ENCODE measurements at regions of chr1 and their contacts with region 1.

Region 1: GRCh38 chr1:111334169-111334568 is 43.5 kb downstream of the CHIA start:
- DNase-seq: peak in 23 of 42 donors; percentile 3 to 61 (median 34)

Region 2: GRCh38 chr1:111227851-111228747 is 106.1 kb before region 1 on chr1:
- intact Hi-C with region 1: loop called (anchors 5 kb)
- DNase-seq: peak in 20 of 42 donors; percentile 18 to 70 (median 46)

Region 3: GRCh38 chr1:111256988-111257658 is 77.0 kb before region 1 on chr1:
- intact Hi-C with region 1: no loop called
- DNase-seq: no peak

Region 4: GRCh38 chr1:111856411-111857185 is 522.4 kb after region 1 on chr1:
- intact Hi-C with region 1: no loop called
- DNase-seq: no peak

Measured in head of caudate nucleus (tissue), 42 donors.